ENCODE measurements at regions of chr19 and their contacts with region 1.

Region 1: GRCh38 chr19:47019431-47020041 is at the start of gene NPAS1:
- DNase-seq: no peak
- total RNA-seq, gene NPAS1: 5.2 and 7.7 TPM in 2 replicates

Region 2: DNA sequence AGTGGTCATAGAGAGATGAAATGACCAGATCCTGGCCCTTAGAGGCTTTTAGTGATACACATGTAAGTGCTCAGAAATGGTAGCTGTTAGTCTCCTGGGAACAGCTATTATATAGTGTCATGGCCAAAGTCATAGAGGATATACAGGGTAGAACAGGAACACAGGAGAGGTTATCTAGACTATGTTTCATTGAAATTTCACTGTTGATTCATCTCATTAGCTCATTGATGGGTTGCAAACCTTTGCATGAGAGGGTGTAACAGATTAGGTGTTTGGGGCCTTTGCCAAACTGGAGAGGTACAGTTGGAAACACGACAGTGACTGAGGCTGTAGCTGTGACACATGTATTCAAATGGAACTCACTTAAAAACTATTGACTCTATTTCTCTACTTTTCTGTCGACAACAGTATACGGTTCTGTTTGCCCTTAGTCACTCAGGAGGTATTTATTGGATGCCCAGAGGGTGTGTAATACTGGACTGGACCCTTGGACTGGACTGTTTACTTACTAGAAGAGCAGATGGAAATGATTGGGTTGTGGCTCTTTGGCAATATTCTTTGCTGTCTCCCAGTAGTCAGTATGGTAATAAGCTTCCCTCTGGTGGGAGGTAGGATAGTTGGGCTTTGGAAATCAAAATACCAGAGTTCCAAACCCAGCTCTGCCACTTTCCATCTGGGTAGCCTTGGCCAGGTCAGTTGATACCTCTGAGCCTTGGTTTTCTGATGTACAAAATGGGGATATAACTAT is 128.9 kb before region 1 on chr19:
- in situ Hi-C with region 1: no loop called
- DNase-seq: peak; percentile 49

Region 3: DNA sequence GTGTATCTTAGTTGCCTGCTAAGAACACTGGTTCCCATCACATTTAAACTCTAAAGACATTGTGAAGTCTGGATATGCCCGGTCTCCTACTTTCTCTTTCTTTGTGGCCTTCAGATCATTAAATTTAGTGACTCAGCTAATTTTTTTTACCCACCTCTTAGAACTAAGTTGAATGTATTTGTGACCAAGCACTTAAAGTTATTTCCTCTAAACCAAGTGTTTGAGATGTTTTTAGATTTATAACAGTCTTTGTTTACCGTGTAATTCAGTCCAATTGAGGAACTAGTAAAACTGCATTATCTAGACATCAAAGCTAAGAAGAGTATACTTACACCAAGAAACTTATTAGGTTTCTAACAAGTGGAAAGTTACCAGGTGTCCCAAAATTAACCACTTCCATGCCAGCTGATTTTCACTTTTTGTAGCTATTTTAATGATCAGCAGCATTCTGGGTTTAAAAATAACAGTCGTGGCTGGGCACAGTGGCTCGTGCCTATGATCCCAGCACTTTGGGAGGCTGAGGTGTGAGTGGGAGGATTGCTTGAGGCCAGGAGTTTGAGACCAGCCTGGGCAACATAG is 105.6 kb before region 1 on chr19:
- in situ Hi-C with region 1: no loop called
- DNase-seq: no peak

Region 4: GRCh38 chr19:46944918-46945628 is 74.5 kb before region 1 on chr19:
- in situ Hi-C with region 1: no loop called
- DNase-seq: peak; percentile 27

Region 5: GRCh38 chr19:47109541-47110375 is 90.2 kb after region 1 on chr19:
- in situ Hi-C with region 1: loop called (anchors 10 kb)
- DNase-seq: peak; percentile 61

Region 6: GRCh38 chr19:47176627-47177090 is 157.1 kb after region 1 on chr19:
- in situ Hi-C with region 1: no loop called
- DNase-seq: no peak